Activated CD4-positive, alpha-beta memory T cell treated with anti-CD3 and anti-CD28 coated beads, Interleukin-2, amount 10 ng/mL, durations not matched to agents 7 days and 5 days (primary cell): ENCODE measurements at regions of chr17 and their contacts with region 1.

Region 1: GRCh38 chr17:2786176-2786881 is 9.9 kb upstream of the RAP1GAP2 start:
- DNase-seq: peak; percentile 92
- H3K4me3 Mint-ChIP-seq: no peak overlapping the region
- H3K27ac Mint-ChIP-seq: no peak overlapping the region
- H3K4me1 Mint-ChIP-seq: peaks cover 29% of the 10 kb centered on the region
- H3K27me3 Mint-ChIP-seq: peaks cover 18% of the 10 kb centered on the region

Region 2: GRCh38 chr17:2796164-2797125 is 10.1 kb after region 1 on chr17 and contains the start of gene RAP1GAP2:
- CTCF ChIA-PET with region 1: interaction called, 28 read pairs
- POLR2A ChIA-PET with region 1: interaction called, 14 read pairs
- DNase-seq: peak; percentile 91
- H3K4me3 Mint-ChIP-seq: peak within 1 kb of the TSS; percentile 97
- H3K27ac Mint-ChIP-seq: peak within 1 kb of the TSS; percentile 77
- H3K4me1 Mint-ChIP-seq: peaks cover 86% of the 10 kb centered on the region
- H3K27me3 Mint-ChIP-seq: peaks cover 18% of the 10 kb centered on the region
- total RNA-seq, gene RAP1GAP2: 36.7 to 39.8 TPM

Region 3: GRCh38 chr17:2814481-2815341 is 28.4 kb after region 1 on chr17:
- CTCF ChIA-PET with region 1: interaction called, 137 read pairs
- POLR2A ChIA-PET with region 1: interaction called, 346 read pairs
- DNase-seq: peak; percentile 98
- H3K4me3 Mint-ChIP-seq: peak overlapping the region; percentile 72
- H3K27ac Mint-ChIP-seq: peak overlapping the region; percentile 93
- H3K4me1 Mint-ChIP-seq: peaks cover 51% of the 10 kb centered on the region
- H3K27me3 Mint-ChIP-seq: peaks cover 22% of the 10 kb centered on the region

Region 4: DNA sequence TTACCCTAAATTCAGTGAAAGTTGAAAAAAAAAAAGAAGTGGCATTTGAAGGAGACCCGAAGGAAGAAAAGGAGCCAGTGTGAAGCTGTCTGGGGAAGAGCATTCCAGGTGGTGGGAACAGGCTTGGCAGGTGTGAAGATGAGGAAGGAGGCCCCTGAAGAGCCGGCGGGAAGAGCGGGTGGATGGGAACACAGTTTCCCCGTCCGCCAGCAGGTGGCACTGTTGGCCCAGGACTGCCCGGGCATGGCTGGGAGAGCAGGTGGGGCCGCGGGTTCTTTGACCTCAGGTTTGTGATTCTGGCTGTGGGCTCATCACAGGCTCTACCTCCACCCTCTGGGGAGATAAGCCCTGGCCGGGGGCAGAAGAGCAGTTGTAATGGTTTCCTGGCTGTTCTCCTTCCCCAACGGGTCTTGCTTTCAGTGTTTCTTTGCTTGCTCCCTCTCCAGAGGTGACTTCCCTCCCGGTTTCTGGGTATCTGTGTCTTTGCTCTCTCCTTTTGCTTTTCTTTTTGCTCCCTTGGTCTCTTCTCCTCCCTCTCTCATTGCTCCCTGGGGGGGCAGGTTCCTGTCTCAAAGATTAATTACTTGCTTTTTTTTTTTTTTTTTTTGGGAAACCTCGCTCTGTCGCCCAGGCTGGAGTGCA is 42.2 kb after region 1 on chr17:
- CTCF ChIA-PET with region 1: interaction called, 25 read pairs
- POLR2A ChIA-PET with region 1: interaction called, 5 read pairs
- DNase-seq: peak; percentile 81
- H3K4me3 Mint-ChIP-seq: no peak overlapping the region
- H3K27ac Mint-ChIP-seq: no peak overlapping the region
- H3K4me1 Mint-ChIP-seq: peaks cover 40% of the 10 kb centered on the region
- H3K27me3 Mint-ChIP-seq: peaks cover 7% of the 10 kb centered on the region

Region 5: GRCh38 chr17:2837147-2837561 is 50.8 kb after region 1 on chr17:
- CTCF ChIA-PET with region 1: interaction called, 13 read pairs
- POLR2A ChIA-PET with region 1: no interaction called
- DNase-seq: peak; percentile 49
- H3K4me3 Mint-ChIP-seq: no peak overlapping the region
- H3K27ac Mint-ChIP-seq: no peak overlapping the region
- H3K4me1 Mint-ChIP-seq: peaks cover 23% of the 10 kb centered on the region
- H3K27me3 Mint-ChIP-seq: peaks cover 2% of the 10 kb centered on the region

Region 6: DNA sequence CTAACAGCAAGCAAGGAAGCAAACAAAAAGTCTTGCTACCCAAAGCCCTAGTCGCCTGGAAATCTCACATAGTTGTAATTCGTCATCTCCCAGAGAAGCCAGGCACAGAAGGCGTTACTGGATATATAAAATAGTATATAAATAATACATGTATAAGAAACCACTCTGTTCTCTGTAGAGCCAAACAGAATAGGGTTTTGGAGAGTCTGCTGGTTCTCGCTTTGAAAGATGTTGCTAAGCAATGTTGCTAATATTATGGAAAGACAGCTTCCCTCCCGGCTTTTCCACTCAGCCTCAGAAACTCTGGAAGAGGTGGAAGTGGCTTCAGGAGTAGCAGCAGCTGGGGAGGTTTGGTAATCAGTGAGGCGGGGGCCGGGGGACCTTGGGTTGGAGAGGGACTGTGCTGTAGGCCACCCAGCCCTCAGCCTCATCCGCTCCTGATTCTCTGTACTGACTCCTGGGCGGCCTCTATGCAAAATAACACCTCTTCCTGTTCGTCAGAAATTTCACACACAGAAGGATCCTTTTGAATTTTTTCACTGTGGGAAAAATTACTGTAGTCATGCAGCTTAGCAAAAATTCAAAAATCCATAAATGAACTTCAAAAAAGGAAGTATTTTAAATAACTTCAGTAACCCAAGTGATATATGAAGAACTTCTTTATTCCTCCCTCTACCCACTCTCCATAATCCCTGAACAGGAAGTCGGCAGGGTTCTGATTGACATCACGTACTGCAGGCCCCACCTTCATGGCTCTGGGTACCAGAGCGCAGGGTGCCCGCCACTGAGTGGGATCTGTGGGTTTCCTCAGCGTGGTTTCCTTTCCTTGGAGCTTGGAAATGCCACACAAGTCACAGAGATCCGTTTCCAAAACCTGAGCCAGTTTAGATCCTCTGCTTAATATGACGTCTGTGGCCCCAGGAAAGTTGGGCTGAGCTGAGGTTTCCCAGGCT is 61.3 kb after region 1 on chr17:
- CTCF ChIA-PET with region 1: interaction called, 18 read pairs
- POLR2A ChIA-PET with region 1: no interaction called
- DNase-seq: no peak
- H3K4me3 Mint-ChIP-seq: no peak overlapping the region
- H3K27ac Mint-ChIP-seq: no peak overlapping the region
- H3K4me1 Mint-ChIP-seq: peaks cover 18% of the 10 kb centered on the region
- H3K27me3 Mint-ChIP-seq: peaks cover 18% of the 10 kb centered on the region